ENCODE measurements at regions of chr15 and their contacts with region 1.

Region 1: DNA sequence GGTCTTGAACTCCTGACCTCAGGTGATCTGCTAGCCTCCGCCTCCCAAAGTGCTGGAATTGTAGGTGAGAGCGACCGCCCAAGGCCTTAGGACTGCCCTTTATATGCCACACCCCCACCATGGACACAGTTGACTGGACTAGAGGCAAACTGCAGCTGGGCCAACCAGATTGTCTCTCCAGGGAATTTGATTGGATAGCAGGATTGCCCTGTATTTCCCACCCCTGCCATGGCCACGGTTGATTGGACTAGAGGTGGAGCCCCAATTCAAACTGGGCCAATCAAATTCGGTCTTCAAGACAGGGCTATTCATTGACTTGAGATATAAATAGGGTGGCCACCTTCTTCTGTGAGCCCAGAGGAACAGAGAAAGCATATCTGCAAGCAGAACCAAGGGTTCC is 6.9 kb upstream of the CLPX start:
- DNase-seq: no peak
- H3K4me3 ChIP-seq: no peak overlapping the region
- H3K27ac ChIP-seq: no peak overlapping the region
- H3K4me1 ChIP-seq: peaks cover 0 to 6% (median 1%) of the 10 kb centered on the region in 4 donors
- H3K27me3 ChIP-seq: no peaks in the 10 kb centered on the region
- CTCF ChIP-seq: no peak
- EP300 ChIP-seq: no peak
- POLR2A ChIP-seq: no peak

Region 2: GRCh38 chr15:64749999-64750657 is 441.9 kb before region 1 on chr15:
- in situ Hi-C with region 1: no loop called
- intact Hi-C with region 1: no loop called
- DNase-seq: no peak
- H3K4me3 ChIP-seq: no peak overlapping the region
- H3K27ac ChIP-seq: peak overlapping the region; percentile 60 to 85 (median 79)
- H3K4me1 ChIP-seq: peaks cover 3 to 28% (median 18%) of the 10 kb centered on the region in 4 donors
- H3K27me3 ChIP-seq: no peaks in the 10 kb centered on the region
- CTCF ChIP-seq: no peak
- EP300 ChIP-seq: no peak
- POLR2A ChIP-seq: no peak

Region 3: DNA sequence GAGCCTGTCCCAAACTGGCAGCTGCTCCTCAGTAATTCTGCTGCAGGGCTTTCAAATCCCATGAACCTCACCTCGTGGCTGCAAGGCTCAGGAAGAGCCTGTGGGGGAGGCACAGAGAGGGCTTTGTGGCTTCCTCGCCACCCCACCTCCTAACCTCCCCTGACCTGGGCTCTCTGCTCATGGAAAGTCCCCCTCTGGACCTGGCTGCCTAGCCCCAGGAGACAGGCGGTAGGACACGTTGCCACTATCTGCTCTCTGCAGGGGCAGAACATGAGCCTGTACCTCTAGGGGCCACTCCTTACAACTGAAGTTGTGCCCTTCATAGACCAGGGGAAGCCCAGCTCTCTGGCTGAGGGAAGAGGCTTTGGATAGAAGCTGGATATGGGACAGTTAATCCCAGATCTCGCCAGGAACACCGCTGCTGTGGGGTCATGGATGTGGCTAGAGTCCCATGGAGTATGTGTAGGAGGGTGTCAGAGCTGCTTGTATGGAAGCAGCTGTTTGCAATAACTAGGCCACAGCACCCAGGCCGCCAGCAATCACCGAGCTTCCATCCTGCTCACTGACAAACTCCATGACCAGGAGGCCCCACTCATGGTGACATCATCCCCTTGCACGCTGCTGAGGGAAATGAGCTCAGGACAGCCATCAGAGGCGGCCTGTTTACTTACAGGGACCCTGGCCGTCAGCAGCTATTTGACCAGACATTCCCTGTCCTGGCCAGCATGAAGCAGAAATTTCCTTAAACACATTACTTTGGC is 53.3 kb after region 1 on chr15:
- in situ Hi-C with region 1: no loop called
- intact Hi-C with region 1: no loop called
- DNase-seq: peak; percentile 34
- H3K4me3 ChIP-seq: no peak overlapping the region
- H3K27ac ChIP-seq: peak overlapping the region; percentile 42 to 69 (median 56)
- H3K4me1 ChIP-seq: peaks cover 0 to 5% (median 2%) of the 10 kb centered on the region in 4 donors
- H3K27me3 ChIP-seq: no peaks in the 10 kb centered on the region
- CTCF ChIP-seq: no peak
- EP300 ChIP-seq: no peak
- POLR2A ChIP-seq: no peak

Region 4: DNA sequence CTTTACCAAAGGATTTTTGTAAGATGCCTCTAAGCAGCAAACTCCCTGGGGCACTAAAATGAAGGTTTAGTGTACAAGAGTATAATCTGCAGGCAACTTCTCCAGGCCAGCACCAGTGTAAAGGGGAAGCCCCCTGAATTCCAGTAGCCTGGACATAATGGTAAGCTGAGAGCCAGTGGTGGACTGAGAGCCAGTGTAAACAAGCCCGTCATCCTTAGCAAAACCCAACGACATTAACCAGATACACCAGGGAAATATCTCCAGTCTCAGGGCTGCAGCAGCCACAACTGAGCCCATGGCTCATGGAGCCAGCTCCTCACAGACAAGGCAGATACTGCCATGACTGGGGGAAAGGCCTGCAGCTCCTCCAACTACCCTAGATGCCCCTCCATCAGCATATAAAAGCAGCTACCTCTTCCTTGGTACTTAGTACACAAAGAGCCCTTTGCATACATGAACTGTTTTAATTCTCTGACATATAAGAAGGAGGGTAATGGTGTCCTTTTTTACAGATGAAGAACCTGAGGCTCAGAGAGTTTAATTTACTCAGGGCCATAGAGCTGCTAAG is 72.9 kb after region 1 on chr15:
- in situ Hi-C with region 1: loop called (anchors 10 kb)
- intact Hi-C with region 1: loop called (anchors 2 kb)
- DNase-seq: no peak
- H3K4me3 ChIP-seq: no peak overlapping the region
- H3K27ac ChIP-seq: peak overlapping the region in 3 of 4 donors; percentile 0 to 73 (median 50)
- H3K4me1 ChIP-seq: peaks cover 2 to 26% (median 14%) of the 10 kb centered on the region in 4 donors
- H3K27me3 ChIP-seq: no peaks in the 10 kb centered on the region
- CTCF ChIP-seq: no peak
- EP300 ChIP-seq: no peak
- POLR2A ChIP-seq: no peak

Measured in transverse colon (tissue), 4 donors.